ENCODE measurements at regions of chr11 and their contacts with region 1.

Region 1: GRCh38 chr11:116960930-116961329 is 123.5 kb upstream of the APOA1 start:
- DNase-seq: peak; percentile 76
- H3K4me3 ChIP-seq: no peak overlapping the region
- H3K27ac ChIP-seq: peak overlapping the region; percentile 53
- H3K4me1 ChIP-seq: peaks cover 29% of the 10 kb centered on the region
- H3K27me3 ChIP-seq: no peaks in the 10 kb centered on the region
- CTCF ChIP-seq: no peak

Region 2: GRCh38 chr11:116885951-116886655 is 74.8 kb before region 1 on chr11:
- CTCF ChIA-PET with region 1: no interaction called
- dilution Hi-C with region 1: loop called (anchors 5 kb)
- in situ Hi-C with region 1: no loop called
- intact Hi-C with region 1: no loop called
- DNase-seq: no peak
- H3K4me3 ChIP-seq: no peak overlapping the region
- H3K27ac ChIP-seq: no peak overlapping the region
- H3K4me1 ChIP-seq: peaks cover 14% of the 10 kb centered on the region
- H3K27me3 ChIP-seq: no peaks in the 10 kb centered on the region
- CTCF ChIP-seq: no peak

Region 3: DNA sequence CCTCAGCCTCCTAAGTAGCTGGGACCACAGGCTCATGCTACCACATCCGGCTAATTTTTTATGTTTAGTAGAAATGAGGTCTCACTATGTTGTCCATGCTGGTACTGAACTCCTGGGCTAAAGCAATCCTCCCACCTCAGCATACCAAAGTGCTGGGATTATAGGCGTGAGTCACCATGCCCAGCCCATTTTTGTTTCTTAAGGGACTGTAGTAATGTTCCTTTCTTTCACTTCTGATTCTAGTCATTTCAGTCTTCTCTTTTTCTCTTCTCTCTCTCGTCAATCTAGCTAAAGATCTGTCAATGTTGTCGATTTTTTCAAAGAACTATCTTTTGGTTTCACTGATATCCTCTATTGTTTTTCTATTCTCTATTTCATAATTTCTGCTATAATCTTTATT is 12.5 kb before region 1 on chr11:
- CTCF ChIA-PET with region 1: no interaction called
- dilution Hi-C with region 1: no loop called
- in situ Hi-C with region 1: no loop called
- intact Hi-C with region 1: no loop called
- DNase-seq: peak; percentile 65
- H3K4me3 ChIP-seq: no peak overlapping the region
- H3K27ac ChIP-seq: peak overlapping the region; percentile 60
- H3K4me1 ChIP-seq: peaks cover 10% of the 10 kb centered on the region
- H3K27me3 ChIP-seq: no peaks in the 10 kb centered on the region
- CTCF ChIP-seq: no peak

Region 4: GRCh38 chr11:116986521-116987105 is 25.7 kb after region 1 on chr11:
- CTCF ChIA-PET with region 1: interaction called, 14 read pairs
- dilution Hi-C with region 1: no loop called
- in situ Hi-C with region 1: no loop called
- intact Hi-C with region 1: loop called (anchors 2 kb)
- DNase-seq: peak; percentile 94
- H3K4me3 ChIP-seq: peak overlapping the region in 2 of 3 experiments; percentile 11 to 27
- H3K27ac ChIP-seq: peak overlapping the region; percentile 84
- H3K4me1 ChIP-seq: peaks cover 61% of the 10 kb centered on the region
- H3K27me3 ChIP-seq: no peaks in the 10 kb centered on the region
- CTCF ChIP-seq: no peak

Region 5: DNA sequence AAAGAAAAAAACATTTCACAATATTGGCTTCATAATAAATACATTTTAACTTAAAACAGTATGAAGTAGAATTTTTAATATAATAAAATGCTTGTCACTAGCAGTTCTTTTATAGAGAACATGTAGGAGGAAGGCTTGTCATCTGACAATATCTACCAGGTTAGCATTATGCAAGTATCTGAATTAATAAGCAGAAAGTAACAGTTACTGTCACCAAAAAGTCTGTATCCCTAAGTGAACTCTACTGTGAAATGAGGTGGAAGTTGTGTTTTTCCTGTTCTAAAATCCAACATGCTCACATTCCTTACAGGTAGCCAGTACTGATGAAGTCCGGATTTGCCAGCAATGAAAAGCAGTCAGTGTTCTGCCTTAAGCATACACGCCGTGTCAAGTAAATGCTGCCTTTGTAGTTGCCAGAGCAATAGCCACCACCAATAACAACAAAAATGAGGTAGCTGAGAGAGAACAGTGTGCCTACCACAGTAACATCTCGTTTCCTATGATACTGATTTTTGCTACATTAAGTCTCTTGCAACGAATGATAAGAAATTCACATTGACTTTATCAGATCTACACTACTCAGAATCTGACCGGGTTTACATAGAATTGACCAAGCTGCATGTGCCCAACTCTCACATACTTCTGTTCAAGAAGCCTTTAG is 41.8 kb after region 1 on chr11:
- CTCF ChIA-PET with region 1: no interaction called
- dilution Hi-C with region 1: loop called (anchors 5 kb)
- in situ Hi-C with region 1: no loop called
- intact Hi-C with region 1: no loop called
- DNase-seq: peak; percentile 42
- H3K4me3 ChIP-seq: no peak overlapping the region
- H3K27ac ChIP-seq: peak overlapping the region; percentile 12
- H3K4me1 ChIP-seq: peaks cover 10% of the 10 kb centered on the region
- H3K27me3 ChIP-seq: no peaks in the 10 kb centered on the region
- CTCF ChIP-seq: no peak

Measured in mammary epithelial cell (primary cell).